Naive thymus-derived CD8-positive, alpha-beta T cell (primary cell): ENCODE measurements at regions of chr17 and their contacts with region 1.

Region 1: GRCh38 chr17:17237026-17237799 is at the start of gene FLCN:
- DNase-seq: peak; percentile 83 to 99 (median 88)
- ATAC-seq: peak; percentile 94
- H3K4me3 Mint-ChIP-seq: peak within 1 kb of the TSS; percentile 91 to 98 (median 96)
- H3K27ac Mint-ChIP-seq: peak within 1 kb of the TSS; percentile 98 to 100 (median 99)
- H3K4me1 Mint-ChIP-seq: peaks cover 19 to 38% (median 30%) of the 10 kb centered on the region in 4 donors
- H3K27me3 Mint-ChIP-seq: no peaks in the 10 kb centered on the region
- polyA plus RNA-seq, gene FLCN: 3.1 to 4.9 (median 4.8) TPM

Region 2: DNA sequence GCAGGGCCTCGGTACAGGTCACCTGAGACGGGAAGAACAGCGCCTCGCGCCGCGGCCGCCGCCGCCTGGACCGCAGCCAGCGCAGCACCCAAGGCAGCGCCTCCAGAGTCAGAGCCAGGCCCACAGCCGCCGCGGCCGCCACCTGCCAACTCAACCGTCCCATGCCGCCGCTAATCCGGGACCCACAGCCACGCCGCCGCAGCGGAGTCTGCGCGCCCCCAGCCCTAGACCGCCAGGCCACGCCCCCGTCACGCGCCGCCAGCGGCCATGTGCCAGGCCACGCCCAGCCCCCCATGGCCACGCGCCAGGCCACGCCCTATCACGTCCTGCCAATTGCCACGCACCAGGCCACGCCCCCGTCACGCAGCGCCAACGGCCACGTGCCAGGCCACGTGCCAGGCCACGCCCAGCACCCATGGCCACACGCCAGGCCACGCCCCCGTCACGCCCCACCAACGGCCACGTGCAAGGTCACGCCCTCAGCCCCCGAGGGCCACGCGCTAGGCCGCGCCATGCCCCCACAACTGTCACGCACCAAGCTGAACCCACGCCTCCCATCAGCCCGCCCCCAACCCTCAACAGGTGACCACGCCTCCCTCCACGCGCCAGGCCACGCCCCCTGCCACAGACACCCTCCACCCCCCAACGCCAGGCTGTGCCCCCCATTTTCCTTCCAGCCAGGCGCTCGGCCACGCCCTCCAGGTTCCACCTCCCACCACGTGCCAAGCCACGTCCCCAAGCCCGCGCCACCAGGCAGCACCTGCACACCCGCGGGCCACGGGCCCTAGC is 30.9 kb before region 1 on chr17 and contains the start of gene PLD6:
- POLR2A ChIA-PET with region 1: interaction called, 13 read pairs
- DNase-seq: peak; percentile 87 to 97 (median 94)
- ATAC-seq: peak; percentile 72 to 75
- H3K4me3 Mint-ChIP-seq: peak within 1 kb of the TSS; percentile 75 to 93 (median 90)
- H3K27ac Mint-ChIP-seq: peak within 1 kb of the TSS; percentile 77 to 98 (median 94)
- H3K4me1 Mint-ChIP-seq: peaks cover 14 to 41% (median 30%) of the 10 kb centered on the region in 4 donors
- H3K27me3 Mint-ChIP-seq: no peaks in the 10 kb centered on the region
- polyA plus RNA-seq, gene PLD6: 6.6 to 9.8 (median 8.2) TPM